Lower leg skin (tissue), 4 donors: ENCODE measurements at regions of chr11 and their contacts with region 1.

Region 1: DNA sequence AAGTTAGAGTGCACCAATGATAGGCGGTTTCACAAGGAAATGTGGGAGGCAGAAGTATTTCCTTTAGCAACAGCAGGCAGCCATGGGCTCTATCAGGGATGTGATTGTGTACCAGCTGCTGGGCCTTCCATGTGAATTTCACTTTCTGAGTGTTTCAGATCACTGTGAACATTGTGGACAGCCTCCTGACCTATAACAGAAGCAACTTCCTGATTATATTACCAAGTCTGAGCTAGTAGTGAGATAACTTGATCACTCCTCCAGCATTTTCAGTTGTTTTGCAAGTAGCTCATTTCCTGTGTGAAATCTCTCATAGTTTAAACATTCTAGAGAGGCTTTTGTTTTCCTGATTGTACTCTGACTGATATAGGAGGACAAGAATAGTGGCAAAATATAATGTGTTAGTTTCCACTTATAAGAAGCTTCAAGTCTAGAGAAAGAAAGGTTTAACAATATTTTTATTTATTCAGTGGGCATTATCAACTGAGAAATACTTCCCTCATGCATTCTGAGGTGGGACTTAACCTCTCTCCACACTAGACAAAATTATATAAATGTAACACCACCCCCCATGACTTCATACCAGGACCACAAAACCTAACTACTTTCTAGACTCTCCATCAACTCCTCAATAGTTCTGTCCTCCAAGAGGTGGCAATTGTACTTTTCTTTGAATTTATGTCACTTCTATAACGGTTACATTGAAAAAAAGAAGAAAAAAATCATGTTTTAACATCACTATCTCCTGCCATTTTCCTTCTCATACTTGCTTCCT is 184.2 kb upstream of the LUZP2 start:
- DNase-seq: no peak
- H3K4me3 ChIP-seq: no peak overlapping the region
- CTCF ChIP-seq: no peak
- POLR2A ChIP-seq: no peak

Region 2: DNA sequence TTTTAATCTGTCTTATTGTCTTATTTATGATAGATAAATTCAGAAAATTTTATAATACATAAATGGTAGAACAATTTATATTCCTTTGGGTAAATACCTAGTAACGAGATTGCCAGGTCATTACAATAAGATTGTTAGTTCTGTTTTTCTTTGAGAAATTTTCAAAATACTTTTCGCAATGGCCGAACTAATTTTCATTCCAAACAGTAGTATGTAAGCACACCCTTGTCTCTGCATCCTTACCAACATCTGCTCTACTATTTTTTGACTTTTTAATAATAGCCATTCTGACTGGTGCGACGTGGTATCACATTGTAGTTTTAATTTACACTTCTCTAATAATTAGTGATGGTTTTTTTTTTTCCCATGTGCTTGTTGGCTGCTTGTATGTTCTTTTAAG is 167.2 kb before region 1 on chr11:
- intact Hi-C with region 1: no loop called
- DNase-seq: no peak
- H3K4me3 ChIP-seq: no peak overlapping the region
- CTCF ChIP-seq: no peak
- POLR2A ChIP-seq: no peak

Region 3: DNA sequence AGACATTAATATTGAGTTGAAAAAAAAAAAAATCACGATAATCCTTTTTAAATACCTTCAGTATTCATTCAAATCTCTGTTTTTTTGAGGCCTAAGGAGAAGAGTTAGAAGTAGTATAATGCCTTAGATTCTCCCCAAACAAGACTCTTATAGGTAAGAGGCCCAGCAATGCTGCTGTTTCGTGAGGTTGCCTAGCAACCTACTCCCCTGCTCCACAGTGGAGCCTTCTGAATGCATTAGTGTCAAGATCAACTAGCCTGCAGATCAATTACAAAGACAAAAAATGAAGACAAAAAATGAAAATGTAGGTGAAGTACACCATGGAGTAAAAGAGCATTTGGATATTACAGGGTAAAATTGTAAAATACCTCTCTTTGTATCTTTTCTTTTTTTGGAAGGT is 45.6 kb before region 1 on chr11:
- intact Hi-C with region 1: loop called (anchors 2 kb)
- DNase-seq: no peak
- H3K4me3 ChIP-seq: no peak overlapping the region
- CTCF ChIP-seq: no peak
- POLR2A ChIP-seq: no peak